ENCODE measurements at regions of chr3 and their contacts with region 1.

Region 1: DNA sequence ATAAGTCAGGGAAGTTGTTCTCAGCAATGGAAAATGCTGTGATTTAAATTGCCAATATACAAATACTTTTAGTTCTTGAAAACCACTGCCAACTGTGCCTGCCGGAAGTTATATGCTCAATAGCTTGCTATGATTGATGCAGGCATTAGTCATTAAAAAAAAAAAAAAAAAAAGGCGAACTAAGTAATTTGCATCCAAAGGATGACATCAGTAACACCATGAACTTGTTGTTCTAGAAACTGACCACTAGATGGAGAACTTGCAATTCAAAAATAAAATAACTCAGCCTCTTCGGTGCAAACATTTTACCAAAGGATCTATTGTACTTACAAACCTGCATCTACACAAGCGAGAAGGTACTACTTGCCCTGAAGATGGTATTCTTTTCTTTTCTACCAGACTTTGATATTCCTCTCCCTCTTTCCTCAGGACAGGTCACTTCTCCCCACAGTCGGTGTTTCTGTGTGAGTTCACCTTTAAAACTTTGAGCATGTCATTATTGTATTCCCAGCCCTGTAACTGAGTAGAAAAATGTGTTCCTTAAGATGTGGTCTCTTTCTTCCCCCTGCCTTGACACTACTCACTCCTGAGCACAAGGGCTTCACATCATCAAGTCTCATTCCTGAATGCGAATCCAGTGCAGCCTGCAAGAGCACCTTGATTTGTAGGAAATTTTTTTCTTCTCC is 115.0 kb upstream of the VEPH1 start:
- DNase-seq: peak; percentile 89
- ATAC-seq: peak; percentile 80
- H3K4me3 ChIP-seq: no peak overlapping the region
- H3K27ac ChIP-seq: no peak overlapping the region
- H3K4me1 ChIP-seq: peaks cover 5% of the 10 kb centered on the region; the same call in 1 of the 2 replicates
- H3K27me3 ChIP-seq: no peaks in the 10 kb centered on the region
- CTCF ChIP-seq: peak; percentile 77

Region 2: DNA sequence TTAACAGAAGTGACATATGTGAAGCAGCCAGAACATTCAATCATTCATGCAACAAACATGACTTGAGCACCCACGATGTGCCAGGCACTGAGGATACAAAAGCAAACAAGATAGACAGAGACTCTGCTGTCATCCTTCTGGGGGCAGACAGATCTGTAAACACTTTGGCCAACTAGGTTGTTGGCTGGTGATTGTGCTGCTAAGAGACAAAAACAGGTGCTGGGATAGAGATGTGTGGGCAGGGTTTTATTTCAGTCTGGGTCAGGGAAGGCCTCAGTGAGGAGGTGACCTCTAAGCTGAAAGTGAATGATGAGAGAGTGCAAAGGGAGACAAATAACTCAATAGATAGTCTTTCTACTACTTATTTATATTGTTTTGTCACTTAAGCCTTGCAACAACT is 32.0 kb after region 1 on chr3:
- CTCF ChIA-PET with region 1: interaction called, 10 read pairs
- POLR2A ChIA-PET with region 1: no interaction called
- intact Hi-C with region 1: no loop called
- DNase-seq: no peak
- ATAC-seq: no peak
- H3K4me3 ChIP-seq: no peak overlapping the region
- H3K27ac ChIP-seq: no peak overlapping the region
- H3K4me1 ChIP-seq: no peaks in the 10 kb centered on the region
- H3K27me3 ChIP-seq: no peaks in the 10 kb centered on the region
- CTCF ChIP-seq: no peak

Region 3: DNA sequence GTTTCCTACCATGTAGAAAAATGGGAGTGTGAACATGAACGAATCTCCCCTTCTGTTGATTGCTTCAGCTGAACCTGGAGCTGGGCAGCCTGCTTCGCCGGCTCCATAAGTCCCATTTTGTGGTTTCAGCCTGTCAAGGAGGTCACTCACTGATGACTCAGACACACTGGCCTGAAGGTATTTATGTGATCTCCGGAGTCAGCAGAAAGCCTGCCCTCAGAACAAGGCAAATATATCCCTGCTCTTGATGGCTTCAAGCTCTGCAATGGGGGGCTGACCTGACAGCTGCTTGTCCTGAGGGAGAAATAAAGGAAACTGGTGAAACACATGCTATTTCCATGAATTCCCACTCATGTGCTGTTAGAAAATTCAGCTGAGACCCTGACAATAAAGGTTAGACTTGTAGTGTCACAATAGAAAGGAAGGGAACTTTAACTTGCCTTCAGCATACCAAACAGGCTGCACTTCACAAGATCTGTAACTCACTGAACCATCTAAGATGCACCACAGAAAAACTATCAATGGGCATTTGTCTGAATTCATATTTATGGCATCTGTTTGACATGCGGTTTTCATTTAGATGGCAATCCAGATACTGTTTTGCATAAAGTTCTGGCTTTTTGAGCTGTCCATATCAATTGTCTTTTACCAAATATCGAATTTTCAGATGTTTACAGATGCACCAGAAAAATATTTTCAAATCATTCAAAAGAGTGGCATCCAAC is 167.0 kb after region 1 on chr3:
- CTCF ChIA-PET with region 1: no interaction called
- POLR2A ChIA-PET with region 1: no interaction called
- intact Hi-C with region 1: loop called (anchors 1 kb)
- DNase-seq: peak; percentile 97
- ATAC-seq: peak; percentile 89
- H3K4me3 ChIP-seq: peak overlapping the region; percentile 37; the same call in 1 of the 2 replicates
- H3K27ac ChIP-seq: peak overlapping the region; percentile 83
- H3K4me1 ChIP-seq: peaks cover 66% of the 10 kb centered on the region
- H3K27me3 ChIP-seq: no peaks in the 10 kb centered on the region
- CTCF ChIP-seq: no peak

Region 4: GRCh38 chr3:157913741-157914150 is 295.5 kb after region 1 on chr3:
- CTCF ChIA-PET with region 1: interaction called, 7 read pairs
- POLR2A ChIA-PET with region 1: no interaction called
- intact Hi-C with region 1: loop called (anchors 2 kb)
- DNase-seq: peak; percentile 34
- ATAC-seq: peak; percentile 30
- H3K4me3 ChIP-seq: no peak overlapping the region
- H3K27ac ChIP-seq: peak overlapping the region; percentile 16; the same call in 1 of the 2 replicates
- H3K4me1 ChIP-seq: peaks cover 46% of the 10 kb centered on the region
- H3K27me3 ChIP-seq: no peaks in the 10 kb centered on the region
- CTCF ChIP-seq: no peak

Region 5: GRCh38 chr3:158167737-158168471 is 549.7 kb after region 1 on chr3:
- CTCF ChIA-PET with region 1: no interaction called
- POLR2A ChIA-PET with region 1: no interaction called
- intact Hi-C with region 1: loop called (anchors 5 kb)
- DNase-seq: peak; percentile 90
- ATAC-seq: peak; percentile 94
- H3K4me3 ChIP-seq: no peak overlapping the region
- H3K27ac ChIP-seq: peak overlapping the region; percentile 49
- H3K4me1 ChIP-seq: peaks cover 26% of the 10 kb centered on the region
- H3K27me3 ChIP-seq: no peaks in the 10 kb centered on the region
- CTCF ChIP-seq: no peak

Region 6: GRCh38 chr3:158532099-158532734 is 914.0 kb after region 1 on chr3:
- CTCF ChIA-PET with region 1: no interaction called
- POLR2A ChIA-PET with region 1: no interaction called
- intact Hi-C with region 1: loop called (anchors 1 kb)
- DNase-seq: peak; percentile 53
- ATAC-seq: no peak
- H3K4me3 ChIP-seq: no peak overlapping the region
- H3K27ac ChIP-seq: no peak overlapping the region
- H3K4me1 ChIP-seq: no peaks in the 10 kb centered on the region
- H3K27me3 ChIP-seq: no peaks in the 10 kb centered on the region
- CTCF ChIP-seq: peak; percentile 71

Measured in PC-3 (cell line).